ENCODE measurements at regions of chr5 and their contacts with region 1.

Region 1: DNA sequence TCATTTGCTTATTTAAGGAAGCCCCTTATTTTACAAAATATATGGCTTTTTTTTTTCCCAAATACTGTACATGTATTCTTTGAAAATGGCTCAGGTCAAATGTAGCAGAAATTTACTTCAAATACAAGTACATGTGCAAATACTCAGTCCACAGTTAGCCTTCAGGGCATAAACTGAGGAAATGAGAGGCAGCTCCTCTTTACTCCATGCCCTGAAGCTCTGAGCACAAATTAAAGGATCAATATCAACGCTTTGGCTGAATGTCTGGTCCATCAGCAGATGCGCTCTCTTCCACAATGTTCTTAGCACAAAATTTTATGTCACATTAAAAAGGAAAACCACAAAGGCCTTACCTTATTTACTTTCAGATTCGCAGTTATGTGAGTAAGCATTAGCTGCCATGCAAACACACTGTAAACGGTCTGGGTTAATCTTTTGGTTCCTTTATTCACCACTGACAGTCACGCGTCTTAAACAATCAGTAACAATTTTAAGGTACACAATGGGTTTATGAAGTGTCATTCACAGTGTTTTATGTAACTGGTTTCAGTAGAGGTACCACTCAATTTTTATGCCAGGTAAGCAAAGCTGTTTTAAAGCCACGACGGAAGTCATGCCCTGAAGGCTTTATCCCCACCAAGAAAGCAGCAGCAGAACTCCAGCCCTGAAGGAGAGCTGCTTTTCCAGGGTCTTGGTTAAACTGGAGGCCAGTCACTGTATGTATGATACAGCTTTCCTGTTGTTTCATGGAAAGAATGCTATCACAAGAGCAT is 103.4 kb downstream of the OTULIN start:
- DNase-seq: no peak
- H3K4me3 ChIP-seq: no peak overlapping the region
- H3K27ac ChIP-seq: no peak overlapping the region
- H3K4me1 ChIP-seq: peaks cover 14% of the 10 kb centered on the region
- CTCF ChIP-seq: no peak

Region 2: DNA sequence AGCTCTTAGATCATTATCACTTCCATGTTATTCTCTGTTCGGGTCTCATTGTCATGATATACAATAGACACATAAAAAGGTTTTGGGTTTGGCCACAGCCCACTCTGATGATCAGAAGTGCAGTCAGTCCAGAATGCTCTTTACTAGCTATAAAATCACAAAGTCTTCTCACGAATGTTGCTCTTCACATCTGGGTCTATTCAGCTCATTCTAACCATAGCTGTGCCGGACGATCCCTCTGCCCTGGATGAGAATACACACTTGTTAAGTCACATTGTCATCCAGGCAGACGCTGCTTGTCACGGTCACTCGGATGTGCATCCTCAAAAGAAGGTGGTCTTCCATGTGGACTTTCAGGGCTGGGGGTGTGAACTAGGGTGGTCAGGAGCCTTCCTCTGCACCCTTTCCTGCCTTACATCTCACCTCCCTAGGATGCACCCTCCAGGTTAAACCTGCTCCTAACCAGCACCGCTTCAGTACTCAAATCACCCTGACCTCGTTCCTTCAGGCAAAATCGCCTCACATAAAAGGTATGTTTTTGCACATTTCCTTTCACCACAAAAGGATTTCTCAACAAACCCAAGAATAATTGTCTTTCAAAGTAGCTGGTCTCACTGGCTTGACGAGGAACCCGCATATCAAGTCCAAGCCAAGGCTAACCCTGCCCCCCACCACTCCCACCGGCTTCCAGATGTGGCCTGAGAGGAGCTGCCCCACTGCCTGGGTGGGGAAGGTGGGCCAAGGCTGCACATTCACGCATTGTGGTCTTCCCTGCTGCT is 81.8 kb after region 1 on chr5:
- CTCF ChIA-PET with region 1: no interaction called
- POLR2A ChIA-PET with region 1: interaction called, 12 read pairs
- intact Hi-C with region 1: no loop called
- DNase-seq: no peak
- H3K4me3 ChIP-seq: no peak overlapping the region
- H3K27ac ChIP-seq: no peak overlapping the region
- H3K4me1 ChIP-seq: peaks cover 18% of the 10 kb centered on the region
- CTCF ChIP-seq: no peak